Cardiac septum (tissue), 1 donor: ENCODE measurements at regions of chr4 and their contacts with region 1.

Region 1: DNA sequence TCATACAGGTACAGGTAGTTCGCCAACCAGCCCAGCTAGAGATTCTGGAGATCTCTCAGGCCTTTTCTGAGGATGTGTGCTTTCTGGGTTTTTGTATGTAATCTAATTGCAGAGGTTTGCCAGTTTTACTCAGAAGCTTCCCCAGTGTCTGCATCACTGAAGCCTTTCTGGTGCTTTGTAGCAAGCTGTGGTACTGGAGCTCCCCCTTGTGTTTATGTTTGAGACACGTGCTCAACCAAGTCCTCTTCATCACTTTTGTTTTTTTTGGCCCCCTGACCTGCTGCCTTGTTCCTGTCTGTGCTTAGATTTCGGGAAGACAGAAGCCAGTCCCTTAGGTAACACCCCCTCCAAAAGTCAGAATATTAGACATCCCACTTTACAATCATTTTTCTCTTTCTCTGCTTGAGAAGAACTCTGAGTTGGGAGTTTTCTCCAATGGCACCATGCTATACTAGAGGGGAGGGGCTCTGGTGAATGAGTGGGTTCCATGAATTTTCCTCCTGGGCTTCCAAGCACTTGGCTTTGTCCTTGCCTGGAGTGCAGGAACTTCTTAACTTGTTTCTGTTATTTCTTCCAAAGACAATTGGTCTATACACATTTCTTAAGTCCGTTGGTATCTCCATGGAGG is 128.4 kb upstream of the TBC1D9 start:
- DNase-seq: no peak

Region 2: DNA sequence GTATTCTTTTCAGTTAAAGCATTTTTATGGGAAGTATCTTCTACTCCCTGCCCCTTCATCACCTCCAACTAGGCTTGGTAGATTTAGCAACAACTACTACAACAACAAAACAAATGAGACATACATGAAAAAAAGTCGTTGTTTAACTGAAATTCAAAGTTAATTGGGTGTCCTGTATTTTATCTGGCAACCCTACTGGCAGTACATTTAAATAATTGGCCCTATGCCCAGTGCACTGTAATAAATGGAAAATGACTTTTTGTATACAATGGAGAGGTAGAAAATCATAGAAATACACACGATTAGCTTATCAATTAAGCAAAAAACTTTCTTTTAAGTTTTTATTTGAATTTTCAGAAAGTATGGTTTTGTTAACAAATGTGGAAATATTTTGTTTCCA is 435.7 kb before region 1 on chr4:
- intact Hi-C with region 1: no loop called
- DNase-seq: no peak

Region 3: GRCh38 chr4:140861359-140862176 is 23.0 kb before region 1 on chr4:
- intact Hi-C with region 1: loop called (anchors 2 kb)
- DNase-seq: no peak

Region 4: GRCh38 chr4:140935254-140935653 is 50.7 kb after region 1 on chr4:
- intact Hi-C with region 1: loop called (anchors 10 kb)
- DNase-seq: no peak